Dorsolateral prefrontal cortex (tissue), 120 donors: ENCODE measurements at regions of chr5 and their contacts with region 1.

Region 1: GRCh38 chr5:6712577-6713275 is 506 bp upstream of the TENT4A start:
- DNase-seq: peak; percentile 89 to 97 (median 94)
- H3K4me3 ChIP-seq: peak overlapping the region; percentile 55 to 98 (median 88)
- H3K27ac ChIP-seq: peak overlapping the region; percentile 57 to 99 (median 97)
- H3K27me3 ChIP-seq: no peaks in the 10 kb centered on the region
- CTCF ChIP-seq: peak in 20 of 56 donors; percentile 0 to 60 (median 22)

Region 2: GRCh38 chr5:6488021-6488420 is 224.7 kb before region 1 on chr5:
- intact Hi-C with region 1: loop called in 1 of 2 experiments (anchors 5 kb)
- DNase-seq: peak in 2 of 10 donors; percentile 69 to 74
- H3K4me3 ChIP-seq: peak overlapping the region in 1 of 59 donors; percentile 32
- H3K27ac ChIP-seq: peak overlapping the region in 7 of 59 donors; percentile 5 to 28 (median 11)
- H3K27me3 ChIP-seq: peaks cover 0 to 79% (median 5%) of the 10 kb centered on the region in 45 donors
- CTCF ChIP-seq: peak in 11 of 56 donors; percentile 10 to 44 (median 24)